H1 (cell line): ENCODE measurements at regions of chr17 and their contacts with region 1.

Region 1: DNA sequence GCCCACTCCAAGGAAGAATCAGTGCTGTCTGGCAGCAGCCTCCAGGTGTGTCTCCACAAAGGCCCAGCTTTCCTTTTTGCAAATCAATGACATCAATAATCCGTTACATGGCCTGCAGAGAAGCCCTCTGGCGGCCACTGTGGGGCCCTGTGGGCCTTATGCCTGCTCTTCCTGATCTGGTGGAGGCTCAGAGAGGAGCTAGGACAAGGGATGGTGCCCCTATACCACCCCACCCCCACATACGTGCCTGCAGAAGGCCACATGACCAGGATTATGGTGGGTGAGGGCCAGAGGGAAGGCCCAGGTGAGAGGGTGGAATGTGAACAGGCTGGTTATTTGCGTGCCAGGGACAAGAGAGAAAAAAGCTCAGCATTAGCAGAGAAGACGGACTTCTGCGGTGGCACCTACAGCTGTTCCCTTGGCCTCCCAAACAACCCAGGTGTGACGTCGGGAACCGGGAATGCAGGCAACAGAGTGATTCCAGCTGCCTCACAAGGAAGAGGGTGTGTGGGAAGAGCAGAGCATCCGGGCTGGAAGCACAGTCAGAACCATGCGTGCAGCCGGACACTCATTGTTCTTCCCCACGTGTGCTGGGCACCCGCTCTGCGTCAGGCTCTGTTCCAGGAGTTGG is 22.5 kb downstream of the EIF4A3 start:
- DNase-seq: peak; percentile 51 to 71
- H3K4me3 ChIP-seq: peak overlapping the region in 3 of 4 experiments; percentile 29 to 35 (median 31); a peak in 5 of 8 replicates
- H3K27ac ChIP-seq: peak overlapping the region; percentile 68
- H3K4me1 ChIP-seq: peaks cover 3 to 18% (median 12%) of the 10 kb centered on the region in 4 experiments
- H3K27me3 ChIP-seq: no peaks in the 10 kb centered on the region
- CTCF ChIP-seq: peak; percentile 70 to 82 (median 82)
- EP300 ChIP-seq: 0 out of 3 replicates have a peak, but pooled peaks of 1 of the 2 experiments have one; percentile 15
- POLR2A ChIP-seq: peak in 1 of 2 experiments; percentile 65; a peak in 2 of 3 replicates
- RAD21 ChIP-seq: peak; percentile 58 to 70

Region 2: GRCh38 chr17:80087346-80088265 is 36.9 kb before region 1 on chr17:
- CTCF ChIA-PET with region 1: interaction called, 23 read pairs
- POLR2A ChIA-PET with region 1: interaction called, 8 read pairs
- DNase-seq: no peak
- H3K4me3 ChIP-seq: no peak overlapping the region
- H3K27ac ChIP-seq: no peak overlapping the region
- H3K4me1 ChIP-seq: no peaks in the 10 kb centered on the region; a peak in 2 of 7 replicates
- H3K27me3 ChIP-seq: no peaks in the 10 kb centered on the region
- CTCF ChIP-seq: no peak
- EP300 ChIP-seq: no peak
- POLR2A ChIP-seq: no peak
- RAD21 ChIP-seq: no peak

Region 3: DNA sequence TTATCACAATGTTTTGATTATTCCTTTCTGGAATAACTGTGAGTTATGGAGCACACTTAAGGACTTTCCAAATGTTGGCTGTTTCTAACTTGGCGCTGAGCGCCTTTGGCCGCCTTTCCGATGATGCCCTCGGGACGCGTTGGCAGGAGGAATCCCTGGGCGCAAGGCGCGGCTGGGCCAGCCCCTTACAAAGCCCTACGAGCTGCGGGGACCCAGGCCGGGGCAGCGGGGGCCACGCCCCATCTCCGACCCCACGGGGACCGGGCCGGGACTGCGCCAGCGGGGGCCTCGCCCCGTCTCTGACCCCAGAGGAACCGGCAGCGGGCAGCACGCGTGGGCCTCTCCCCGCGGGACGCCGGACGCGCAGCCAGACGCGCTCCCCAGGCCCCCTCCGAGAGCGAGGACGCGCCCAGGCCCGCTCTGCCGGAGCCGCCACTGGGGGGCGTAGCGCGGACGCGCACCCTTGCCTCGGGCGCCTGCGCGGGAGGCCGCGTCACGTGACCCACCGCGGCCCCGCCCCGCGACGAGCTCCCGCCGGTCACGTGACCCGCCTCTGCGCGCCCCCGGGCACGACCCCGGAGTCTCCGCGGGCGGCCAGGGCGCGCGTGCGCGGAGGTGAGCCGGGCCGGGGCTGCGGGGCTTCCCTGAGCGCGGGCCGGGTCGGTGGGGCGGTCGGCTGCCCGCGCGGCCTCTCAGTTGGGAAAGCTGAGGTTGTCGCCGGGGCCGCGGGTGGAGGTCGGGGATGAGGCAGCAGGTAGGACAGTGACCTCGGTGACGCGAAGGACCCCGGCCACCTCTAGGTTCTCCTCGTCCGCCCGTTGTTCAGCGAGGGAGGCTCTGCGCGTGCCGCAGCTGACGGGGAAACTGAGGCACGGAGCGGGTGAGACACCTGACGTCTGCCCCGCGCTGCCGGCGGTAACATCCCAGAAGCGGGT is 23.2 kb before region 1 on chr17 and contains the start of gene GAA:
- CTCF ChIA-PET with region 1: interaction called, 43 read pairs
- POLR2A ChIA-PET with region 1: interaction called, 11 read pairs
- DNase-seq: peak; percentile 44 to 96
- H3K4me3 ChIP-seq: peak within 1 kb of the TSS; percentile 67 to 87 (median 86)
- H3K27ac ChIP-seq: peak within 1 kb of the TSS; percentile 20; the same call in 1 of the 2 replicates
- H3K4me1 ChIP-seq: peaks cover 0 to 7% (median 1%) of the 10 kb centered on the region in 4 experiments; a peak in 4 of 7 replicates
- H3K27me3 ChIP-seq: peaks cover 0 to 9% (median 5%) of the 10 kb centered on the region in 4 experiments; a peak in 3 of 7 replicates
- CTCF ChIP-seq: peak; percentile 71 to 91 (median 81)
- EP300 ChIP-seq: no peak
- POLR2A ChIP-seq: peak in 1 of 2 experiments; percentile 76; a peak in 2 of 3 replicates
- RAD21 ChIP-seq: peak; percentile 20 to 53; a peak in 2 of 4 replicates
- total RNA-seq, gene GAA: 25.3 and 30.0 TPM in 2 replicates

Region 4: DNA sequence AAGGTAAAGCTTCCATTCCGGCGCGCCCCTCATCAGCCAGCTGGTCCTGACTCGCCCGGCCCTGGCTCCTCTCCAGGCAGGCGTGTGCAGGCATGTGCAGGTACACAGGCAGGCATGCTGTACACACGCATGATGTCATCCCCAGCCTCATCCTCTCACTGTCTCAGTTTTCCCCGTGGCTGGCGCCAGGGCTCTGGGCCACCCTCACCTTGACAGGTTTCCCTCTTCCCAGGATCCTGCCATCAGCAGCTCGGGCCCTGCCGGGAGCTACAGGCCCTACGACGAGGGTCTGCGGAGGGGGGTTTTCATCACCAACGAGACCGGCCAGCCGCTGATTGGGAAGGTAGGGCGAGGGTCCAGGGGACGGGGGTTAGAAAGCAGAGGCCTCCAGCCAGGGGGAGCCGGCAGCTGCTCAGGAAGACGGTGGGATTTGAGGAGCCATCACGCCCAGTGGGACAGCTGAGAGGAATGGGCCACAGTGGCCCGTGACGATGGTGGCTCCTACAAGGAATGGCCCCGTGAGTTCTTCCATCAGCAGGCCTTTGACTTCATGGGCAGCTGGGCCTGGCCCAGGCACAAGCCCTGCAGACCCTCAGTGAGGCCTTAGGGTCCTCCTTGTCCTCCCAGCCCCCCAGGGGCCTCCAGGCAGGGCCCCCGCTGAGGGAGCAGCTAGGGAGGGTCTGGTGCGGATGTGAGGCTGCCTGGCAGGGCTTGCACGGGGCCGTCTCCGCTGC is 14.6 kb before region 1 on chr17:
- CTCF ChIA-PET with region 1: interaction called, 43 read pairs
- POLR2A ChIA-PET with region 1: interaction called, 12 read pairs
- DNase-seq: no peak
- H3K4me3 ChIP-seq: no peak overlapping the region
- H3K27ac ChIP-seq: no peak overlapping the region
- H3K4me1 ChIP-seq: peaks cover 0 to 11% (median 8%) of the 10 kb centered on the region in 4 experiments; a peak in 4 of 7 replicates
- H3K27me3 ChIP-seq: no peaks in the 10 kb centered on the region
- CTCF ChIP-seq: no peak
- EP300 ChIP-seq: no peak
- POLR2A ChIP-seq: no peak
- RAD21 ChIP-seq: no peak

Region 5: GRCh38 chr17:80147035-80147836 is 22.8 kb after region 1 on chr17 and contains the start of gene EIF4A3:
- CTCF ChIA-PET with region 1: interaction called, 6 read pairs
- POLR2A ChIA-PET with region 1: interaction called, 103 read pairs
- DNase-seq: peak; percentile 97 to 98
- H3K4me3 ChIP-seq: peak within 1 kb of the TSS; percentile 84 to 95 (median 88)
- H3K27ac ChIP-seq: peak within 1 kb of the TSS; percentile 83
- H3K4me1 ChIP-seq: peaks cover 2 to 20% (median 6%) of the 10 kb centered on the region in 4 experiments
- H3K27me3 ChIP-seq: no peaks in the 10 kb centered on the region; a peak in 2 of 7 replicates
- CTCF ChIP-seq: peak in 1 of 3 experiments; percentile 10; a peak in 1 of 4 replicates
- EP300 ChIP-seq: no peak
- POLR2A ChIP-seq: peak; percentile 55 to 74
- RAD21 ChIP-seq: peak; percentile 14 to 24; a peak in 2 of 4 replicates
- total RNA-seq, gene EIF4A3: 146 and 155 TPM in 2 replicates